MCF 10A (cell line): ENCODE measurements at regions of chr14 and their contacts with region 1.

Region 1: DNA sequence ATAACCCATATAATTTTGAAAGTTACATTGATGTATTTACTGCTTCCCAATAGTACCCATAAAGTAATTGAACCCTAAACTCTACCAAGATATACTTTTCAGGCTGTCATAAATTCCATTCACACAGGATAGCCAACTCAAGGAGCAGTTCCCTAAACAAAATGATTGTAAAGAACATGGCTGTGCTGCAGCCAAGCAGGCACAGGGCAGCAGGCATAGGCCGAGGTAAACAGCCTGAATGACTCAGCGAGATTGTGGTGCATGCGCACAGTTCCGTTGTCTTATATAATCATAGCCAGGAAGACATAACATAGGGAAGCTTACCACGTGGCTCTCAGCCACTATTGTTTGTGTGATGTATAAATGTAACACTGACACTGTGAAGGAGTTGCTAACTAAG is 344.9 kb downstream of the FSCB start:
- DNase-seq: no peak
- H3K4me3 Mint-ChIP-seq: no peak overlapping the region
- H3K27ac Mint-ChIP-seq: no peak overlapping the region
- H3K4me1 Mint-ChIP-seq: peaks cover 7% of the 10 kb centered on the region
- H3K27me3 Mint-ChIP-seq: no peaks in the 10 kb centered on the region
- CTCF ChIP-seq: no peak

Region 2: GRCh38 chr14:44149597-44149996 is 12.6 kb before region 1 on chr14:
- CTCF ChIA-PET with region 1: interaction called, 11 read pairs
- POLR2A ChIA-PET with region 1: no interaction called
- intact Hi-C with region 1: no loop called
- DNase-seq: peak; percentile 68
- H3K4me3 Mint-ChIP-seq: no peak overlapping the region
- H3K27ac Mint-ChIP-seq: no peak overlapping the region
- H3K4me1 Mint-ChIP-seq: no peaks in the 10 kb centered on the region
- H3K27me3 Mint-ChIP-seq: no peaks in the 10 kb centered on the region
- CTCF ChIP-seq: peak; percentile 72